ENCODE measurements at regions of chr6 and their contacts with region 1.

Region 1: GRCh38 chr6:138588805-138589434 is 89.6 kb upstream of the NHSL1 start:
- H3K4me3 ChIP-seq: no peak overlapping the region
- H3K27ac ChIP-seq: no peak overlapping the region
- H3K4me1 ChIP-seq: peaks cover 19% of the 10 kb centered on the region
- CTCF ChIP-seq: peak; percentile 83

Region 2: DNA sequence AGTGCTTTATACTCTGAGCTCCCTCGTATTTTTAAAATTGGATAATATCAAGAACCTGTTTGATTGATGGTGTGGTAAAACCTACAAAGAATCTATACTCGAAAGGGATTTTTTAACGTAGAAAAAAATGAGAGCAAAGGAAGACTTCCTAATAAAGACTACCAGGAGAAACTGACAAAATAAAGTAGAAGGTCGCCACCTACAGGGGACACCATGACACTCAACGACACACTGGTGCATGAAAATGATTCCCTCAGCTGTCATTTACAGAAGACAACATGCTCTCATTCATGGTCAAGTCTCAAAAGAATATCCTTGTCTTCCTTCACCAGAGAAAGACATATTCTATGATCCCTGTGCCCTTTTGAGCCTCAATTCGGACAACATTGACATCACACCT is 79.5 kb before region 1 on chr6:
- CTCF ChIA-PET with region 1: interaction called, 14 read pairs
- POLR2A ChIA-PET with region 1: no interaction called
- H3K4me3 ChIP-seq: no peak overlapping the region
- H3K27ac ChIP-seq: no peak overlapping the region
- H3K4me1 ChIP-seq: peaks cover 4% of the 10 kb centered on the region; the same call in 1 of the 2 replicates
- CTCF ChIP-seq: peak; percentile 56; the same call in 1 of the 2 replicates

Region 3: DNA sequence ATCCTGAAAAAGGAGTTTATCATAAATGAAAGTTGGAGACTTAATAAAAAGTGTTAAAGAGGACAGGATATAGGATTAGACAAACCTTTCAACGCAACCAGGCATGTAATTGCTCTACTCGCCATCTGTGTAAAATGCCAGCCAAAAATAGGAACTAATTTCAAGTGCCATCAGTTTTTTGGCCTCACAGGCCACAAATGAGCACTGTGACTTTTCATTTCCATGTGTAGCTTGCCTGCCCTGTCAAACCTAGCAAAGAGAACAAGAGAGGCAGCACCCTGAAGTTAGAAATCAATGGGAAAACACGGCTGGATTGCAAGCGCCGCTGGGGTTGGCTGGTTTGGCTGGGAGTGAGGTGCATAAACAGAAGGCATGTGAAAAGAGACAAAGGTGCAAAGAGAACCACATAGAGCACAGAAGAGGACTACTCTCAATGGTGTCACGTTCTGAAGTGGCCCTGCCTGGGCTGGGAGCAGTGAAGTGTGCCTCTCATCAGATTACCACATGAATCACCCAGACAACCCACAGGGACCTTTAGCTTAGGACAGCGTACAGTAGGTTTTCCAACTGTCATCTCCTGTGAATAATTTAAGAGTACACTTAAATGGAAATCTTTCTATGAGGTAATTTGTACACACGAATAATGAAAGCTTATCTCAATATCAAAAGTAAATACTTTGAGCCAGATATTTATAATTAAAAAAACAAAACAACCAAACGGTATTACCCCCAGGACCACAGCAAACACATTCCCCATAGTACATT is 11.6 kb before region 1 on chr6:
- CTCF ChIA-PET with region 1: interaction called, 40 read pairs
- POLR2A ChIA-PET with region 1: interaction called, 3 read pairs
- H3K4me3 ChIP-seq: no peak overlapping the region
- H3K27ac ChIP-seq: no peak overlapping the region
- H3K4me1 ChIP-seq: peaks cover 18% of the 10 kb centered on the region
- CTCF ChIP-seq: no peak

Region 4: DNA sequence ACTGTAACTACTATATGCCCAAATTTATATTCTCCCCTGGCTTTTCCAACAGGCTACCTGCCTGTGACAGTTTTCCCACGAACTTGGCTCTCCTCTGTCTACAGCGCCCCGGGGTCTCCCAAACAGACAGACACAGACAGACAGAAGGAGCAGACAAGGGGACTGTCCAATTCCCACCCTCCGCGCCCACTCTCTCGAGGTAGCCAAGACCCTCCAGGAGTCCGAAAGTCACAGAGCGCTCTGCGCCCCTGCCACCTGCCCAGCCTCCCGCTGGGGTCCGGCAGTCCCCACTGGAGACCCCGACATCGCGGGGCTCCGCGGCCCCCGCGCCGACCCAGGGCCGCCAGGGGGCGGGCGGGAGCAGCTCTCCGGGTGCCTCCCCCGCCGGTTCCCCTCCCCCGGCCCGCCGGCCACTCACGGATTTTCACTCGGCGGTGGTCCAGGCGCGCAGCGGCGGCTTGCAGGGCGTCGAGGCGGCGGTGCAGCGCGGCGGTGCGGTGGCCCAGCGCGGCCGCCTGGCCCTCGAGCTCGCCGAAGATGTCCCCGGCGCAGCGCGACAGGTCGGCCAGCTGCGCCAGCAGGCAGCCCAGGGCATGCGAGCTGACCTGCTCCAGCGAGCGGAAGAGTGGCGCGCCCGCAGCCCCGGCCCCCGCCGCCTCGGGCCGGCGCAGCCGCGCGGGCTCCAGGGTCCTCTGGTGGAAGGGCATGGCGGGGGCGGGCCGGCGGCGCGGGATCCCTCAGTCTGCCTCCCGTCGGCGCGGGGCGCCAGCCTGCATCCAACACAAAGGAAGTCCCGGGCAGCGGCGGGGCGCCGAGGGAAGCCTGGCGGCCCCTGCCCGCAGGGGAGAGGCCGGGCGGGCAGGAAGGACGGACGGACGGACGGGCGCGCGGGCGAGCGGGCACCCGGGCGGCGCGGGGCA is 103.4 kb after region 1 on chr6:
- CTCF ChIA-PET with region 1: interaction called, 14 read pairs
- POLR2A ChIA-PET with region 1: interaction called, 3 read pairs
- H3K4me3 ChIP-seq: peak overlapping the region; percentile 85
- H3K27ac ChIP-seq: peak overlapping the region; percentile 95; the same call in 1 of the 2 replicates
- H3K4me1 ChIP-seq: no peaks in the 10 kb centered on the region
- CTCF ChIP-seq: peak; percentile 81

Region 5: DNA sequence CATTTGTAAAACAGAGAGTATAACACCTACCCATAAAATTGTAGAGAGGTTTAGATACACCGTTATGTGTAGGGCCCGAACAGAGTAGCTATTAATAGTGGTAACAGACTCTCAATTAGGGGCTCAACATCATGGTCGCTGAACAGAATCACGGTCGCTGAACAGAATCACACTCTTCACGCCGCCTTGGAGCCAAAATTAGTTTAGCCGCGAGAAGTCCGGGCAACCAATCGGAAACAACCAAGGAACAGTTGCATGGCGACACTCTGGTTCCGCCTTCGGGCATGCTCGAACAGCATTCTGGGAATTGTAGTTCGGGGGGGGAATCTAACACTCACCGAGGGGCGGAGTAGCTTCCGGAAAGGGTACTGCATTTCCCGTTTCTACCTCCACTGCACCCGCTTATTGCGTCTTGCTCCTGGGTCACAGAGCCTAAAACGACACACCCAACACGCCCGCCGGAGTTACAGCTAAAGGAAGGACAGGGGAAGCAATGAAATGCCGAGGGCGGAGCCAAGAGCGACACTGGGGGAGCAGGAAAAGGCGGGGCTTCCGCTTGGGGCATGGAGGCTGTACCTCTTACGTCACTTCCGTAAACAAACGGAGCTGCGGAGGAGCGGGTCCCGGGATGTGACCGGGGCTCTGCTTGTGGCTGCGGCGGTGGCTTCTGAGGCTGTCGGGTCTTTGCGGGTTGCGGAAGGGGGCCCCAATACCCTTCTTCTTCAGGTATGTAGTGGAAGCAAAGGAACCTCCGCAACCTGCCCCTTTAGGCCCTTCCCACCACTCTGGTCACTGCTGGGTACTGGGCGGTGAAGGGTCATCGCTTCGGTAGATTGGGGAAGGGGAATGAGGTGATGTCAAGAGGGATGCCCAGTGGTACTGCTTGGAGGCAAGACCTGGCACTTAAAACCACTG is 184.5 kb after region 1 on chr6 and contains the start of gene CCDC28A:
- CTCF ChIA-PET with region 1: interaction called, 157 read pairs
- POLR2A ChIA-PET with region 1: no interaction called
- H3K4me3 ChIP-seq: peak within 1 kb of the TSS; percentile 87
- H3K27ac ChIP-seq: peak within 1 kb of the TSS; percentile 88
- H3K4me1 ChIP-seq: no peaks in the 10 kb centered on the region
- CTCF ChIP-seq: no peak

Region 6: GRCh38 chr6:139625998-139626975 is 1037.4 kb after region 1 on chr6:
- CTCF ChIA-PET with region 1: no interaction called
- POLR2A ChIA-PET with region 1: no interaction called
- H3K4me3 ChIP-seq: no peak overlapping the region
- H3K27ac ChIP-seq: no peak overlapping the region
- H3K4me1 ChIP-seq: no peaks in the 10 kb centered on the region
- CTCF ChIP-seq: no peak

Measured in HEK293 (cell line).